MCF 10A (cell line): ENCODE measurements at regions of chr19 and their contacts with region 1.

Region 1: DNA sequence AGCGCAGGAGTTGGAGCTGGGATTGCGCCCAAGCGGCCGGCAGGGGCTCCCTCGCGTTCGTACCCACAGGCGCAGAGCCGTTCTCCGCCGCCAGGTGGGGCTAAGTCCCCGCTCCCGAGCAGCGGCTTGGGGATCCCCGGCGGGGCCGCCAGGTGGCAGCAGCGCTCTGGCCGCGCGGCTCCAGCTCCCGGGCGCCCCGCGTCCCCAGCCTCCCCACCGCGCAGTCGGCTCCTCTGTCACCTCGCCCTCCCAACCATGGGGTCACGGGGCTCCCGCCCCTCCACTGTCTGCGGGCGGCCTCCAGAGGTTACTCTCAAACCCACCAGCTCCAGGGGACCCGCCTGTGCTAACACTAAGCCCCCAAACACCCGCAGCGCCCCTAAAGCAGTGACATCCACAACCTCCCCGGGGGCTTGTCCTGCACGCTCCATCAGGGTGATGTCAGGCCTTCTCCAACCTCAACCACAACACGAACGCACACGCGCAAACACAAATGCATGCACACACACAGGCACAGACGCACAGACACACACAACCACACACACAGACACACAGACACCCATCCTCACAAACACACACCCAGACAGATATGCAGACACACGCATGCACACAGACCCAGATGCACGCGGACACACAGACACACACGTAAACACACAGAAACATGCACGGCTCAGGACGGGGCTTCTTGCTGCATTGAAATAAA is 18.4 kb upstream of the KCTD15 start:
- DNase-seq: peak; percentile 74
- H3K4me3 Mint-ChIP-seq: peak overlapping the region; percentile 4
- H3K27ac Mint-ChIP-seq: no peak overlapping the region
- H3K4me1 Mint-ChIP-seq: peaks cover 6% of the 10 kb centered on the region
- H3K27me3 Mint-ChIP-seq: peaks cover 39% of the 10 kb centered on the region
- CTCF ChIP-seq: peak; percentile 100

Region 2: GRCh38 chr19:33795370-33796163 is 17.3 kb after region 1 on chr19:
- CTCF ChIA-PET with region 1: interaction called, 62 read pairs
- POLR2A ChIA-PET with region 1: interaction called, 7 read pairs
- intact Hi-C with region 1: no loop called
- DNase-seq: peak; percentile 89
- H3K4me3 Mint-ChIP-seq: peak overlapping the region; percentile 77
- H3K27ac Mint-ChIP-seq: peak overlapping the region; percentile 75
- H3K4me1 Mint-ChIP-seq: no peaks in the 10 kb centered on the region
- H3K27me3 Mint-ChIP-seq: no peaks in the 10 kb centered on the region
- CTCF ChIP-seq: peak; percentile 91

Region 3: GRCh38 chr19:33988586-33988985 is 210.3 kb after region 1 on chr19:
- CTCF ChIA-PET with region 1: interaction called, 16 read pairs
- POLR2A ChIA-PET with region 1: no interaction called
- intact Hi-C with region 1: no loop called
- DNase-seq: no peak
- H3K4me3 Mint-ChIP-seq: no peak overlapping the region
- H3K27ac Mint-ChIP-seq: no peak overlapping the region
- H3K4me1 Mint-ChIP-seq: no peaks in the 10 kb centered on the region
- H3K27me3 Mint-ChIP-seq: no peaks in the 10 kb centered on the region
- CTCF ChIP-seq: no peak

Region 4: GRCh38 chr19:34088303-34088702 is 310.1 kb after region 1 on chr19:
- CTCF ChIA-PET with region 1: interaction called, 61 read pairs
- POLR2A ChIA-PET with region 1: no interaction called
- intact Hi-C with region 1: no loop called
- DNase-seq: no peak
- H3K4me3 Mint-ChIP-seq: no peak overlapping the region
- H3K27ac Mint-ChIP-seq: no peak overlapping the region
- H3K4me1 Mint-ChIP-seq: no peaks in the 10 kb centered on the region
- H3K27me3 Mint-ChIP-seq: peaks cover 12% of the 10 kb centered on the region
- CTCF ChIP-seq: no peak

Region 5: GRCh38 chr19:34104096-34104495 is 325.9 kb after region 1 on chr19:
- CTCF ChIA-PET with region 1: interaction called, 23 read pairs
- POLR2A ChIA-PET with region 1: no interaction called
- intact Hi-C with region 1: no loop called
- DNase-seq: no peak
- H3K4me3 Mint-ChIP-seq: no peak overlapping the region
- H3K27ac Mint-ChIP-seq: no peak overlapping the region
- H3K4me1 Mint-ChIP-seq: no peaks in the 10 kb centered on the region
- H3K27me3 Mint-ChIP-seq: peaks cover 16% of the 10 kb centered on the region
- CTCF ChIP-seq: no peak

Region 6: GRCh38 chr19:34155686-34156085 is 377.4 kb after region 1 on chr19:
- CTCF ChIA-PET with region 1: interaction called, 14 read pairs
- POLR2A ChIA-PET with region 1: no interaction called
- intact Hi-C with region 1: no loop called
- DNase-seq: no peak
- H3K4me3 Mint-ChIP-seq: no peak overlapping the region
- H3K27ac Mint-ChIP-seq: no peak overlapping the region
- H3K4me1 Mint-ChIP-seq: no peaks in the 10 kb centered on the region
- H3K27me3 Mint-ChIP-seq: peaks cover 11% of the 10 kb centered on the region
- CTCF ChIP-seq: no peak